ENCODE measurements at regions of chr5 and their contacts with region 1.

Region 1: GRCh38 chr5:156000115-156000514 is 326.8 kb upstream of the SGCD start:
- DNase-seq: no peak
- H3K4me3 ChIP-seq: no peak overlapping the region
- H3K27ac ChIP-seq: no peak overlapping the region
- H3K4me1 ChIP-seq: no peaks in the 10 kb centered on the region
- H3K27me3 ChIP-seq: peaks cover 11% of the 10 kb centered on the region
- CTCF ChIP-seq: no peak

Region 2: DNA sequence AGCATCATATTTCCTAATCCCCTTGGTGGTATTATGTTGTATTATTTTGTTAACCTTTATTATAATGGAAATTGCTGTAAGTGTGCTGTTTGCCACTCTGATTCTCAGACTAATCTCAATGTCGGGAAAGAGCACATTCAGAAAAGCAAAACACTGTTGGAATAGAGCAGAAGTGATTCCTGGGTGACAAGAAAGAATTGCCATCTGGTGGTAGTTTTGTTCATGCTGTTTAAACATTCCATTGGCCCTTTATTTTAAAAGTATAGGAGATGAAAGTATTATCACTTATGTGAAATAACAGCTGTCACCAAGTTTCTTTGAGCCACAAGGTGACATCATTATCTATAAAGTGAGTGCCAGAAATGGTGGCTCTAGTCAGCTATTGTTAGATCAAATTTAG is 25.5 kb after region 1 on chr5:
- CTCF ChIA-PET with region 1: no interaction called
- POLR2A ChIA-PET with region 1: no interaction called
- intact Hi-C with region 1: loop called (anchors 1 kb)
- DNase-seq: no peak
- H3K4me3 ChIP-seq: no peak overlapping the region
- H3K27ac ChIP-seq: no peak overlapping the region
- H3K4me1 ChIP-seq: no peaks in the 10 kb centered on the region
- H3K27me3 ChIP-seq: no peaks in the 10 kb centered on the region
- CTCF ChIP-seq: no peak

Measured in PC-9 (cell line).